Heart right ventricle (tissue), 16 donors: ENCODE measurements at regions of chr1 and their contacts with region 1.

Region 1: DNA sequence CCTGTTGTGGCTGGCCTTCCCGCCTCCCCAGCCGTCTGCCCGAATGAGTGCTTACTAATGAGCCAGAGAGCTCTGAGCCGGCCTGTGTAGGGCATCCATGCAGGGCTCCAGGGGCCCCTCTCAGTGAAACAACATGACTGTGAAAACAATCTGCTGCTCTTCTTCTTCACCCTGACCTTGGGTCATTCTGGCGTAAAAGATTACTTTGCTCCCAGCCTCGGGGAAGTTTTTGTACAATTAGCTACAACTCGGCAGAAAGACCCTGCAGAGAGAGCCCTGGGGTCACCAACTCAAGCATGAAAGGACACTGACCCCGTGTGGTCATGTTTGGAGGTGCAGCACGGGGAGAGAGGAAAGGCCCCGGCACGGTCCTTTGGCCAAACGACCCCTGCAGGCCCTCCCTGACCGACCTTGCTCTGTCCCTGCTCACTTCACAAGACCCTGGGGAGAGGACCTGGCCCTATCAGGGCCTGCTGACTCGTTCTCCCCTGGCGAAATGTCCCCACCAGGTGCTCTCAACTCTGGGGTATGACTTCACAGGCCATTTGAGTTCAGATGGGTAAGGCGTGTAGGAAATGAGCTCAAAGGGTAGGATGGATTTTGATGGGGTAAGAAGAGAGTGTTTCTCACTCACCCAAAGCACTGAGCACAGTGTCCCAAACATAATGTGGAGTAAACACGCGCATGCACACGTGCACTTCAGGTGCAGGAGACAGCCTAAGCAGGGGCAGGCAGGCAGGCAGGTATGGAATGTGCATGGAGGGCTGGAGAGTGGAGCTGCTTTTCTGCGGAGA is 22.9 kb upstream of the FAM20B start:
- DNase-seq: peak; percentile 74 to 79
- ATAC-seq: peak; percentile 71 to 88 (median 85)
- H3K4me3 ChIP-seq: peak overlapping the region in 3 of 10 donors; percentile 2 to 18 (median 6)
- H3K27ac ChIP-seq: peak overlapping the region in 2 of 10 donors; percentile 31 to 48
- H3K4me1 ChIP-seq: peaks cover 0 to 10% (median 7%) of the 10 kb centered on the region in 9 donors
- H3K27me3 ChIP-seq: no peaks in the 10 kb centered on the region
- CTCF ChIP-seq: peak; percentile 81 to 98 (median 96)

Region 2: DNA sequence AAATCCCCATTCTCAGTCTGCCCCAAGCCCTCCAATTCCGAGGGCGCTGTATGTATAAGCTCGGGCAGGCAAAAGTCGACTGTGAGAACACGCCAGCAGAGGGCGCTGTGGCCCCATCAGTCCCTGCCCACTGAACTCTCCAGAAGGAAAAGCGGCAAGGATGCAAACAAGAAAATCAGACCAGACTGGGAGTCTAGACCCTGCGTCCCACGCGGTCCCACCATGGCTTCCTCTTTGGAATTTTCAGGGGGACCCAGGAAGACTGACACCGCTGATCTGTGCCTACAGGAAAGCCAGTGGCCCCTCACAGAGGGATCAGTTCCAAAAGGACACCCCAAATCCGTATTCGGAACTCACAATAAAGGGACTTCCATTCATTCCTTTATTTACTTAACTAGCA is 470.4 kb before region 1 on chr1:
- intact Hi-C with region 1: loop called in 3 of 10 experiments (anchors 5 to 10 kb)
- DNase-seq: peak; percentile 80 to 86
- ATAC-seq: peak; percentile 51 to 78 (median 64)
- H3K4me3 ChIP-seq: no peak overlapping the region
- H3K27ac ChIP-seq: no peak overlapping the region
- H3K4me1 ChIP-seq: peaks cover 0 to 24% (median 9%) of the 10 kb centered on the region in 9 donors
- H3K27me3 ChIP-seq: no peaks in the 10 kb centered on the region
- CTCF ChIP-seq: peak; percentile 81 to 95 (median 91)

Region 3: GRCh38 chr1:178607718-178608408 is 394.9 kb before region 1 on chr1:
- intact Hi-C with region 1: no loop called
- DNase-seq: no peak
- ATAC-seq: no peak
- H3K4me3 ChIP-seq: no peak overlapping the region
- H3K27ac ChIP-seq: no peak overlapping the region
- H3K4me1 ChIP-seq: peaks cover 0 to 13% (median 0%) of the 10 kb centered on the region in 9 donors
- H3K27me3 ChIP-seq: no peaks in the 10 kb centered on the region
- CTCF ChIP-seq: no peak

Region 4: GRCh38 chr1:178768423-178768822 is 234.3 kb before region 1 on chr1:
- intact Hi-C with region 1: loop called in 5 of 10 experiments (anchors 2 to 10 kb)
- DNase-seq: no peak
- ATAC-seq: peak in 5 of 8 donors; percentile 14 to 44 (median 31)
- H3K4me3 ChIP-seq: no peak overlapping the region
- H3K27ac ChIP-seq: no peak overlapping the region
- H3K4me1 ChIP-seq: no peaks in the 10 kb centered on the region
- H3K27me3 ChIP-seq: no peaks in the 10 kb centered on the region
- CTCF ChIP-seq: peak; percentile 42 to 74 (median 68)

Region 5: DNA sequence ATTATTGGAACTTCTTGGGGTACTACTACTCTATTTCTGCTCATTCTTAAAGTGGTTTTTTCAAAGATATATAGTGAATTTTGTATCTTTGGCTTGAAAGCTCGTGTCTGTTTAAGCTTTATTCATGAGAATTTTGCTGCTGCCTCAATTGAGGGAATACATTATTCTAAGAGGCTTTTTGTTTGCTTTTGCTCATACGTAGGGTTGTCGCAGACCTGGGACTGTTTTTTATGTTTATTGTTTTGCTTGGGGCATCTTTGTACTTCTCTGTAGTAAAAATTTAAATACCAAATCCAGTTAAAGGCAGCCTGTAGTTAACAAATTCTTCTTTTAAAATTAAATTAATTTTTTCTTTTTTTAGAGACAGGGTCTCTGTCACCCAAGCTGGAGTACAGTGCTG is 194.2 kb before region 1 on chr1:
- intact Hi-C with region 1: loop called in 7 of 10 experiments (anchors 1 to 10 kb)
- DNase-seq: no peak
- ATAC-seq: no peak
- H3K4me3 ChIP-seq: no peak overlapping the region
- H3K27ac ChIP-seq: no peak overlapping the region
- H3K4me1 ChIP-seq: peaks cover 0 to 3% (median 0%) of the 10 kb centered on the region in 9 donors
- H3K27me3 ChIP-seq: no peaks in the 10 kb centered on the region
- CTCF ChIP-seq: no peak

Region 6: DNA sequence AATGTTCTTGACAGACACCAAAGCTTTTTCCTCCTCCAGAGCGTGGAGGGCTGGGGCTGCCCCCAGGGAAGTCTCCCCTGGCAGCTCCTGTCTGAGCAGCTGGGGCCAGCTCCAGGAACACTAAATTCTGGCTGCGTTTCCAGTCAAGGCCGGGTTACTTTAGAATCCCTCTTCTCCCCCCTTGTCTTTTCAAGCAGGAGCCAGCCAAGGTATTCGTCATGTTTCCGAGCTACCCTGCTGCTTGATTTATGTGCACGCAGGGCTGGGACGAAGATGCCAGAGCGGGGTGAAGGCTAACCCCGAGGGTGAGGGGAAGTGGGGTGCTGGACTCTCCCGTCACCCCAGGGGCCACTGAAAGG is 63.8 kb before region 1 on chr1:
- intact Hi-C with region 1: loop called in 1 of 10 experiments (anchors 5 kb)
- DNase-seq: peak; percentile 78 to 79
- ATAC-seq: peak; percentile 75 to 93 (median 89)
- H3K4me3 ChIP-seq: peak overlapping the region in 5 of 10 donors; percentile 12 to 28 (median 18)
- H3K27ac ChIP-seq: peak overlapping the region; percentile 68 to 89 (median 83)
- H3K4me1 ChIP-seq: peaks cover 11 to 63% (median 36%) of the 10 kb centered on the region in 9 donors
- H3K27me3 ChIP-seq: no peaks in the 10 kb centered on the region
- CTCF ChIP-seq: no peak

Region 7: DNA sequence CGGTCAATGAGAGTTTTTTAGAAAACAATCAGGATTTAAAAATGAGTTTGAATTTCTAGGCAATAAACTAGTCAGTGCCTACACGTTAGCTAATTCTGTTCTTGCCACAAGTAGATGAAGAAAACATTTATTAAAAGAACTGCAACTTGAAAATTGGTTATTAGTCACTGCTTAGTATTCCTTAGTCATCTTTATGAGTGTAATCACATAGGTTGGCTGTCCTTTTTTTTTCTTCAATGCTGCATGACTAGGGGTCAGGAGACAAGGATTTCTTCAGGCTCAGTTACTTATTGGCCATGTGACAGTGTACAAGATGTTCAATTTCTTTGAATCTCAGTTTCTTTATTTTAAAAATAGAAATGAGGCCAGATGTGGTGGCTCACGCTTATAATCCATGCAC is 308.0 kb after region 1 on chr1:
- intact Hi-C with region 1: no loop called
- DNase-seq: no peak
- ATAC-seq: peak in 3 of 8 donors; percentile 20 to 67 (median 60)
- H3K4me3 ChIP-seq: no peak overlapping the region
- H3K27ac ChIP-seq: peak overlapping the region in 1 of 10 donors; percentile 54
- H3K4me1 ChIP-seq: peaks cover 0 to 12% (median 0%) of the 10 kb centered on the region in 9 donors
- H3K27me3 ChIP-seq: no peaks in the 10 kb centered on the region
- CTCF ChIP-seq: no peak

Region 8: DNA sequence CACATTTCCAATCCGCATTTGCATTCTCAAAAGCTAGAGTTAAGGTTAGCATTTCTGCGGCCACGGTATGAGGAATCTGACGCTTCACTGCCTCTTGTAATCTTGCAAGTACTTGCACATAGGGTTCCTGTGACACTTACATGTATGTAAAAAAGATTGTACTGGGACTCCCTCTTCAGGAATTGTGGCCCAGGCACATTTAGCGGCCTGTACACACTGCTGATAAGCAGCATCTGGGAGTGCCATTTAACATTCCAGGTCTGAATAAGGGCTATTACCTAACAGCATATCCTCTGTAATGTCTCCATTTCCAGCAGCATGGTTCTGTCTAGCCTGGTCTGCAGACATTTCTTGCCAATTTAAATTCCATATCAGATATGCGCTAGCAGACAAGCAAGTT is 438.8 kb after region 1 on chr1:
- intact Hi-C with region 1: no loop called
- DNase-seq: no peak
- ATAC-seq: no peak
- H3K4me3 ChIP-seq: no peak overlapping the region
- H3K27ac ChIP-seq: no peak overlapping the region
- H3K4me1 ChIP-seq: no peaks in the 10 kb centered on the region
- H3K27me3 ChIP-seq: peaks cover 0 to 6% (median 0%) of the 10 kb centered on the region in 7 donors
- CTCF ChIP-seq: no peak